ENCODE measurements at regions of chr5 and their contacts with region 1.

Region 1: GRCh38 chr5:73387601-73388305 is 60.8 kb downstream of the FOXD1 start:
- DNase-seq: no peak

Region 2: DNA sequence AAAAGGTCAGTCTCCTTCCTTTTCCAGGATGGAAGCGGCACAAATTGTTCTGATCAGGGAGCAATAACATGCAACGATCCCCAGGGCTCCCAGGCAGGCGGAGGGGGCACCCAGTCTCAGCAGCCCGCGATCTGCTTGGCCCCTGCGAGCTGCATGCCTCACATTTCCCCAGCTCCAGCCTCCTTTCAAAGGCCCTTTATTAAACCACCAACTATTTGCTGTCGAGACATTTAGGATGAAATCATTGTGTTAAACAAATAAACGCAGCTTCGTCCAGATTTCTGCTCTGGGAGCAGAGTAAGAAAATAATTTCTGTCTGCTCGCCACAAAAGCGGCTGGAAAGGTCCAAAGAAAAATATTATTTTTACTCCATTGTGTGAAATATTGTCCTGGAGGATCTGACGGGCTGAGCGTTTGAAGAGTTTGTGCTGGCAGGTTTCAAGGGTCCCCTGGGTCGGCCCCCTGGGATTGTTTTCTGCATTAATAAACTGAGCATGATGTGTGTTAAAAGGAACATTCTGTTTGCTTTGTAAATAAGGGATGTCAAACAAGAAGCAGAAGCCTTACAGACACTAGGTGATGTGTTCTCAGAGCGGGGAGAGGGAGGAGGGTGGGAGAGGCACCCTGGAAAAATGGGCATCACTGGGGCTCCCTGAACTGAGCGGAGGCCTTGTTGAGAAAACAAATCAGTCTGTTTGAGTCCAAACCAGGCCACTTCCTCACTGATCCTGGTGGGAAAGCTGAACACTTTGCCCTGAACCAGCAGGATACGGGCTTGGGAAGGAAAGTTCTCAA is 49.3 kb before region 1 on chr5:
- intact Hi-C with region 1: loop called in 1 of 2 experiments (anchors 10 kb)
- DNase-seq: peak; percentile 80

Region 3: GRCh38 chr5:73405691-73406090 is 17.9 kb after region 1 on chr5:
- intact Hi-C with region 1: no loop called
- DNase-seq: no peak

Region 4: DNA sequence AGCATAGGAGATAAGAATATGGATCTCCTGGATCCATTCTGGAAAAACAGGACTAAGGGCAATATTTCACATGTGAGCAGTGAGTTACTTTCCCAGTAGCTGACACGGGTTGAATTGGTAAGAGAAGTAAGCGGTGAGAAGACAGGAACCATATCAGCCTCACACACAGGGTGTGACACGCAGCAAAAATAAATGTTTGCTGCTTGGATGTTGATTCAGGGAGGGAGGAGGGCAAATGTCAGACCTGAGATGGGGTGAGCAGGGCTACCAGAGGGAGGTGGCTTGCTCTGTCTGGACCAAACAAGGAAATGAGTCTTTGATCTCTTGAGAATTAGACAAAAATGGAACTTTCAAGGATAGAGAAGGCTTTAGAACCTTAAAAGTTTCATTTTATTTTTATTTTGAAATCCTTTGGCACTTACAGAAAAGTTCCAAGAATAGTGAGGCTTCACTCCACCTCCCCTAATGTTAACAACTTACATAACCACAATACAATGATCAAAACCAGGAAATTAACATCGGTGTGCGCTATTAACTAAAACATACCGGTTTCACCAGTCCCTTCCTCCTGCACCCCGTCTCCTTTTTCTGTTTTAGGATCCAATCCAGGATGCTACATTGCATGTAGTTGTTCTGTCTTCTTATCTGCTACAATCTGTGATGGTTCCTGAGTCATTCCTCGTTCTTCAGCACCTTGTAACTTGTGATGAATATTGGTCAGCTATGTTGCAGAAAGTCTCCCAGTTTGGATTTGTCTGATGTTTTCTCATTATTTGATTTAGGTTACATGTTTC is 217.7 kb after region 1 on chr5:
- intact Hi-C with region 1: no loop called
- DNase-seq: no peak

Region 5: GRCh38 chr5:73962801-73963425 is 575.2 kb after region 1 on chr5:
- intact Hi-C with region 1: no loop called
- DNase-seq: no peak

Measured in posterior vena cava (tissue), 2 donors.